HEK293T (cell line): ENCODE measurements at regions of chr12 and their contacts with region 1.

Region 1: DNA sequence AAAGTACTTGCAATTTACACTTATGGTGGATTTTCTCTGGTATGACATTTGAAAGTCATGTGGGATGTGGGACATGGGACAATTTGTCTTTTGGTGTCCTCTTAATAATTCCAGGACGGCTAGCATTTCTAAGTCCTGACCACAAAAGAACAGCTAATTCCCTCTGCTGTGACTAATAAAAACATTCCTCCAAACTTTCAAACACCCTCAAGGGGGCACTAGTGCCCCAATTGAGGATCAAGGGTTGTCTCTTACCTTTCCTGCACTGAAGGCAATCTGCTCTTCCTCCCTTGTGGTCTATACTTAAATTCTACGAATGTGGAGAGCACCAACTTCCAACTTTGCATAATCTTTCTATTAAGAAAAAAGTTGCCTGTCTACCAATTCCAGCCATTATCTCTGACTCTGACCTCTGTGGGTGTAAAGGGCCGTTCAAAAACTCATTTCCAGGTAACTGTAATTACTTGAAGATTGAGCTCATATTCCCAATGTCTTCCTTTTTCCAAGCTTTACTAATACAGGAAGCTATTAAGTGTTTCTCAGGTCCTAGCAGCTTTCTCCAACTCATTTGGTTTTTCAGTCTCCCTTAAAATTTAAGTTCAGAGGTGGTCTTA is 210.2 kb downstream of the PTPRO start:
- DNase-seq: peak; percentile 50

Region 2: GRCh38 chr12:15497671-15498292 is 34.7 kb before region 1 on chr12:
- CTCF ChIA-PET with region 1: no interaction called
- POLR2A ChIA-PET with region 1: no interaction called
- DNase-seq: no peak

Region 3: GRCh38 chr12:15584366-15585041 is 52.0 kb after region 1 on chr12:
- CTCF ChIA-PET with region 1: interaction called, 44 read pairs
- POLR2A ChIA-PET with region 1: interaction called, 4 read pairs
- DNase-seq: peak; percentile 23

Region 4: DNA sequence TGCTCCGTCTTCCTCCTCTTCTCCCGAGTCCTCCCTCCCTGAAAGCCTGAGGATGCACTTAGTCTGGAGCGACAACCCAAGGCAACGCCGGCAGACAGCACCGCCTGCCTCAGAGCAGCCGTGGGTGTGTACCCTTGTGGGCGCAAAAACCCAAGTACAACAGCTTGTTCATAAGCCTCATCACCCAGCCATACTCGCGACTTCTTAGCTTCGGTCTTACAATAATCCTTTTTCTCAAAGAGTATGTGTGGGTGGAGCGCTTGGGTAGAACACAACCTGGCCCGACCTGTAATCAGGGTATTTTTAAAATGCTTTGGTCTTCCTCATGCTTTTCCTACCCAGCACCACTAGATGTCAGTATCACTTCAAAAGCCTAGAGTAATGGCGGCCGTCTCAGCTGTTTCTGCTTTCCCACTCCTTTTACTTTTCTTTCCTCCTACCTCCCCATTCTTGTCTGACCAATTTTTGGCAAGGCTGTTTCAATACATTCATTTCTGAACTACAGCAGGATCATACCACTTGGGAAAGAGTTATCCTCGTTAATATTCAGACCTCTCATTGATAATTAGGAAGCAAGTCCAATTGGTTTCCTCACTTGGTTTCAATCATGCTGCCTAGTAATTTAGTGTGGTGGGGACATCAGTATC is 57.8 kb after region 1 on chr12:
- CTCF ChIA-PET with region 1: interaction called, 44 read pairs
- POLR2A ChIA-PET with region 1: no interaction called
- DNase-seq: peak; percentile 76

Region 5: GRCh38 chr12:15856097-15856982 is 323.9 kb after region 1 on chr12:
- CTCF ChIA-PET with region 1: interaction called, 10 read pairs
- POLR2A ChIA-PET with region 1: no interaction called
- DNase-seq: peak; percentile 32